Pancreas (tissue), 10 donors: ENCODE measurements at regions of chr3 and their contacts with region 1.

Region 1: DNA sequence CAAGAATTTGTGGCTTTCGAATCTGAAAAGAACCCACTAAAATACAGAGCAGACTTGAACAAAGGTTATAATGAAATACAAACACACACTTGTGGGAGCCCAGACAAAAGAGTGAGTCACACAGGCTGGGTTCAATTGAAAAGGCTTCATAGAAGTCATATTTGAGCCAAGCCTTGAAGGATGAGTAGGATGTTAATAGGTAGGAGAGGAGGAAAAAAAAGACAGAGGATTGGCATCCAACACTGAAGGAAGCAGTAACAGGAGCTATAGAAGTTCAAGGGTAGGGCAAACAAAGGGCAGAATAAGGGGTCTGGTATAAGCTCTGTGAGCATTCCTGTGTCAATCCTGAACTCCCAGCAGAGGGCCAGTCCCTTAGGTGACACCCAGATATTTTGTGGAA is 325.4 kb downstream of the FOXP1 start:
- DNase-seq: no peak
- ATAC-seq: peak in 1 of 4 donors; percentile 6
- H3K4me3 ChIP-seq: no peak overlapping the region
- H3K27ac ChIP-seq: no peak overlapping the region
- H3K4me1 ChIP-seq: peaks cover 13 to 20% (median 18%) of the 10 kb centered on the region in 3 donors
- H3K27me3 ChIP-seq: no peaks in the 10 kb centered on the region
- CTCF ChIP-seq: no peak

Region 2: DNA sequence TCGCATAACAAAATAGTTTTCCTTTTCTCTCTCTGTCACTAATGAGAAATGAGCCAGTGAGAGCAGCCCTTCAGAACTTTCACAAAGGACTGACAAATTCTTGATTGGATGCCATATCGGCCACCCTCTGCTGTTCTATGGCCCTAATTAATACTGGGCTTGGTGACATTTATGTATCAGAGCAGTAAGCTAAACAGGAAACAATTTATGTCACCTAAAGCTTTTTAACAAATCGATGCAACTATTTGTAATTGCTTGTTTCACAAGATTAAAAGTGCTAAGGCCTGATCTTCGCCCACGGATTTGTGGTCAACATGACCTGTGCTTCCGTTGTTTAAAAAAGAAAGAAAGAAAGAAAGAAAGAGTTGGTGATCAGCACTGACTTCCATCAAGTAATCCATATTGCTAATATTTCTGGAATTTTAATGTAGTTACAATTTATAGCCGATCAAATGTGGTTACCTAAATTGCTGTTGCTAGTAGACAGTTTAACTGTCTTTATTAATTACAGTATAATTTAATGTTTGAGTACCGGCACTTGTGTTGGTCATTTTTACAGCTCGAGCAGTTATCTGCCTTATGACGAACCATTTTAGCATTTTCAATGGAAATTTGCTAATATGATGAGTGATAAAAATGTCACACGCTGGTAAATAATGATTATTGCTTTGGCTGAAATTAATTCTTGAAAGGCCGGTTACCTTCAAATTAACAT is 305.9 kb before region 1 on chr3:
- intact Hi-C with region 1: no loop called
- DNase-seq: no peak
- ATAC-seq: peak in 1 of 4 donors; percentile 58
- H3K4me3 ChIP-seq: no peak overlapping the region
- H3K27ac ChIP-seq: no peak overlapping the region
- H3K4me1 ChIP-seq: no peaks in the 10 kb centered on the region
- H3K27me3 ChIP-seq: no peaks in the 10 kb centered on the region
- CTCF ChIP-seq: no peak

Region 3: DNA sequence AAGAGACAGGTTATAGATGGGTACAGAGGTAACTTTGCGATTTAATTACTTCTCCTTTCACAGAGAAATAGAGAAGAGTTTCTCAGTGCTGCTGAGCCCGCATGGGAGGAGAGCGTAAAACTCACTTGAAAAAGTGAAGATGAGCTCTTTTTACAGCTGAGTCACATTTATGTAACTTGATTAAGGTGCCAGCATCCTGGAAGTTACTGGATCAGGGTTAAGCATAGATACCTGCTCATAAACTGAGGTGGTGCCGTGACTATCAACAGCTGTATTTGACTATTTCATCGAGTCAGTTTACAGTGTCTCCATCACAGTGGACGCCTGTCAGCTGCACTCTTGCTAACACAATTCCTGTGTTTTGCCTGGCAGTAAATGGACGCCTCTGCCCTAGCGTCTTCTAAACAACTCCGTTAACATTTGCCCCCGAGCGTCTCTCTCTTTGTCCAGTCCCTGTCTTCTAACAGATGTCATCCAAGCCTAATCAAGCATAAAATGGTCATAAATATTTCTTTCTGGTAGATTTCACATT is 89.2 kb before region 1 on chr3:
- intact Hi-C with region 1: loop called in 1 of 3 experiments (anchors 10 kb)
- DNase-seq: no peak
- ATAC-seq: peak in 3 of 4 donors; percentile 35 to 46 (median 37)
- H3K4me3 ChIP-seq: peak overlapping the region in 1 of 4 donors; percentile 2
- H3K27ac ChIP-seq: peak overlapping the region in 2 of 4 donors; percentile 64 to 66
- H3K4me1 ChIP-seq: peaks cover 12 to 28% (median 26%) of the 10 kb centered on the region in 3 donors
- H3K27me3 ChIP-seq: no peaks in the 10 kb centered on the region
- CTCF ChIP-seq: no peak

Region 4: DNA sequence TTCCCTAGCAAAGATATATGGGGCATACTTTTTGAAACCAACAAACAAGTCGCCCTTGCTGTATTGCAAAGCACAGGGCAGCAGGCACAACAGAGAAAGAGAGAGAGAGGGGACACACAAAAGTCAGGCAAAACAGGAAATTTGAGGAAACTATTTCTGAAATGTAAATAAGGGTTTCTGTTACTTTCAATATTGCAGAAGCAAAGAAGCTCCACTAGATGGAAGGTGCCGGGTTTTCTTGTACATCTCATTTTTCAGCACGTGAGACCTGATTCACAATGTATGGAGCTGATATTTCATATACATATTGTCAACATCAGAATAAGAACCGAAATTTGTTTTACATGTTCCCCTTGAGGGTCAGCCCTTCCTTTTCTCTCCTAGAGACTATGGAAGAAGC is 198.0 kb after region 1 on chr3:
- intact Hi-C with region 1: no loop called
- DNase-seq: no peak
- ATAC-seq: peak in 2 of 4 donors; percentile 10 to 32
- H3K4me3 ChIP-seq: no peak overlapping the region
- H3K27ac ChIP-seq: no peak overlapping the region
- H3K4me1 ChIP-seq: peaks cover 0 to 33% (median 17%) of the 10 kb centered on the region in 3 donors
- H3K27me3 ChIP-seq: no peaks in the 10 kb centered on the region
- CTCF ChIP-seq: no peak